PC-9 (cell line): ENCODE measurements at regions of chr9 and their contacts with region 1.

Region 1: DNA sequence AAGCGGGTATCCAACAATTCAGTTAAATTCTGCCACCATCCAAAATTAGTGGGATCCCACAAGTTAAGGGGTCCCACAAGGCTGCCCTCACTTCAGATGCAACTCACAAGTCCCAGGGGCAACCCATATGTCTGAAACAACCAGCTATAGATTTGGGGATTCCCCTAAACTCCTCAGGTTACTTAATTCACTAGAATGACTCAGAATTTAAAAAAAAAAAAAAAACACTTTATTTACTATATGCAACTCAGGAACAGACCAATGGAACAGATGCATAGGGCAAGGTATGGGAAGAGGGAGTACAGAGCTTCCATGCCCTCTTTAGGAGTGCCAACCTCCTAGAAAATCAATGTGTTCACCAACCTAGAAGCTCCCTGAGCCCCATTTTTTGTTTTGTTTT is 15.1 kb downstream of the AUH start:
- DNase-seq: no peak
- H3K4me3 ChIP-seq: no peak overlapping the region
- H3K27ac ChIP-seq: no peak overlapping the region
- H3K4me1 ChIP-seq: peaks cover 9% of the 10 kb centered on the region; the same call in 1 of the 2 replicates
- H3K27me3 ChIP-seq: no peaks in the 10 kb centered on the region
- CTCF ChIP-seq: no peak

Region 2: DNA sequence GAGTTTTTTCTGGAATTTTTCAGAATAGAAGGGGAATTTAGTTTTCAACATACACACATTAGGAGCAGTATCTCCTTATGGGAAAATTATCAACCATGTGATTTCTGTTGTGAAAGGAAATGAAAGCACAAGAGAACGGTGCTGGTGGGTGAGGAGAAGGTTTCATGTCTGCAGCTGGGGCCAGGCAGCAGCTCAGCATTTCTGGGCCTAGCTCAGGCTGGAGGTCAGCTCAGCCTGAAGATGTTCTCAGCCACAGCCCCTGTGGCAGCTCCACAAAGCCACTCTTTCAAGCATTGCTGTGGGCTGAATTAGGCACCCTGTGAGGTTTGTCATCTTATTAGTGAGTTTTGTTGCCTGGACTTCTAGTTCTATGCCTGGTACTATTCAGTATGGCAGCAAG is 794.3 kb before region 1 on chr9:
- CTCF ChIA-PET with region 1: no interaction called
- POLR2A ChIA-PET with region 1: interaction called, 11 read pairs
- intact Hi-C with region 1: no loop called
- DNase-seq: no peak
- H3K4me3 ChIP-seq: no peak overlapping the region
- H3K27ac ChIP-seq: no peak overlapping the region
- H3K4me1 ChIP-seq: peaks cover 12% of the 10 kb centered on the region
- H3K27me3 ChIP-seq: no peaks in the 10 kb centered on the region
- CTCF ChIP-seq: no peak

Region 3: GRCh38 chr9:91274949-91275348 is 71.7 kb before region 1 on chr9:
- CTCF ChIA-PET with region 1: no interaction called
- POLR2A ChIA-PET with region 1: interaction called, 10 read pairs
- intact Hi-C with region 1: no loop called
- DNase-seq: no peak
- H3K4me3 ChIP-seq: no peak overlapping the region
- H3K27ac ChIP-seq: peak overlapping the region; percentile 11; the same call in 1 of the 2 replicates
- H3K4me1 ChIP-seq: 0 out of 2 replicates have a peak, but pooled peaks cover 8% of the 10 kb centered on the region
- H3K27me3 ChIP-seq: no peaks in the 10 kb centered on the region
- CTCF ChIP-seq: no peak

Region 4: GRCh38 chr9:91301161-91301560 is 45.5 kb before region 1 on chr9:
- CTCF ChIA-PET with region 1: no interaction called
- POLR2A ChIA-PET with region 1: interaction called, 20 read pairs
- intact Hi-C with region 1: no loop called
- DNase-seq: no peak
- H3K4me3 ChIP-seq: no peak overlapping the region
- H3K27ac ChIP-seq: no peak overlapping the region
- H3K4me1 ChIP-seq: peaks cover 71% of the 10 kb centered on the region
- H3K27me3 ChIP-seq: no peaks in the 10 kb centered on the region
- CTCF ChIP-seq: no peak

Region 5: GRCh38 chr9:91315191-91315590 is 31.5 kb before region 1 on chr9:
- CTCF ChIA-PET with region 1: no interaction called
- POLR2A ChIA-PET with region 1: no interaction called
- intact Hi-C with region 1: no loop called
- DNase-seq: peak; percentile 50 to 65
- H3K4me3 ChIP-seq: no peak overlapping the region
- H3K27ac ChIP-seq: peak overlapping the region; percentile 54
- H3K4me1 ChIP-seq: peaks cover 50% of the 10 kb centered on the region
- H3K27me3 ChIP-seq: no peaks in the 10 kb centered on the region
- CTCF ChIP-seq: no peak

Region 6: DNA sequence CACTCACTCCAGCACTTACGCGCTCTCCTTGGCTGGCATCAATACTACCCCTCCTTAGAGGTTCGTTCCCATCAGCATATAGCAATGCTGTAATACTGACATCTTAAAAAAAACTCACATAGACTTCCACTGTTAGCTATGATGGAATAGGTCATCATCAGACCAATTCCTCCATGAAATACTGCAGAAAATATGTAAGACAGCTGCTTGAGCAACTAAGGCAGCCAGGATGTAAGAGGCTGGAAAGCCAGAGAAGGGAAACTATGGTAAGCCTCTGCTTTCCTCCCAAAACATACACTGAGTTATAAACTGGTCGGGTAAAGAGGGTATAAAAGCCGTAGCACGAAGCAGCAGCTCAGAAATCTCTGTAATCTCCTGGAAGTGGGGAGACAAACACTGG is 18.5 kb before region 1 on chr9:
- CTCF ChIA-PET with region 1: no interaction called
- POLR2A ChIA-PET with region 1: no interaction called
- intact Hi-C with region 1: no loop called
- DNase-seq: no peak
- H3K4me3 ChIP-seq: no peak overlapping the region
- H3K27ac ChIP-seq: no peak overlapping the region
- H3K4me1 ChIP-seq: no peaks in the 10 kb centered on the region
- H3K27me3 ChIP-seq: no peaks in the 10 kb centered on the region
- CTCF ChIP-seq: no peak